Naive thymus-derived CD4-positive, alpha-beta T cell (primary cell): ENCODE measurements at regions of chr3 and their contacts with region 1.

Region 1: DNA sequence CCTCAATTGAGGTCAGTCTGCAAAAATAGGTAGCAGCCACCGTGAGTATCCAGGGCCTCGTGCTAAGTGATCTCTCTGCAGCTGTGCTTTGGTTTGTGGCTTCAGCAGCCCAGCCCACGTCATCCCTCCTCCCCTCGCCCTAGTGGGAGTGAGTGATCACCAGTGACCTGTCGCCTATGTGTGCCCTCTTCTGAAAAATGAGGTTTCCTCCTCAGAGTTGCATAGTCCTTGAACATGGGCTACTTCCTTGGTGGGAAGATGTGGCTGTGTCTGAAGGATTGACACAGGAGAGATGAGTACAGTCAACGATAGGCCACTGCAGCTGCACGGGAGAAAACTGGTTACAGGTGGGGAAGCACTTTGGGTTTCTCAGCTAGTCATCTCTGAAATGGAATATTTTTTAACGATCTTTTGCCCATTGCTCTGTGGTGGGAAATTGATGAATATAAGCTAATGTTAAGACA is 144.8 kb upstream of the BHLHE40 start:
- DNase-seq: peak in 5 of 9 donors; percentile 28 to 79 (median 39)
- ATAC-seq: peak; percentile 64
- H3K4me3 ChIP-seq: no peak overlapping the region
- H3K4me3 Mint-ChIP-seq: peak overlapping the region; percentile 21 to 86 (median 47)
- H3K27ac ChIP-seq: peak overlapping the region; percentile 55
- H3K27ac Mint-ChIP-seq: peak overlapping the region; percentile 74 to 99 (median 90)
- H3K4me1 ChIP-seq: peaks cover 53 to 67% of the 10 kb centered on the region in 2 donors
- H3K4me1 Mint-ChIP-seq: peaks cover 56 to 89% (median 80%) of the 10 kb centered on the region in 7 donors
- H3K27me3 ChIP-seq: no peaks in the 10 kb centered on the region
- H3K27me3 Mint-ChIP-seq: peaks cover 0 to 3% (median 0%) of the 10 kb centered on the region in 5 donors

Region 2: DNA sequence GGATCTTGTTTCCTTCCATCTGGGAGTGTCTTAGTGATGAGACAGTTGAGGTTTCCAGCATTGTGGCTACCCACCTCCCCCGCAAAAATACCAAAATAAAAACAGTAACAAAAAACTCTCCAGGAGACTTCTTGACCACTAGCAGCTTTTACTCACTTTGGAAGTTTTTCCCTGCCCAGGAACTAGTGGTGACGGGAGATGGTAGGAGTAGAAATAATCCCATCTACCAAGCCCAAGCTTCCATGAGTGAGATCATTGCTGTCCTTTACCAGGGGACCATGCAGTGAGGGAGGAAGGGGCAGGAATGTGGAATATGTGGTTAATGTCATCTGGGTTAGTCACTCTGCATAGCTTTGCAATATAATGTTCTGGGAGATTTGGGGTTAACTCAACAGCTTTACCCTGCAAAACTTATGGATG is 153.5 kb before region 1 on chr3:
- CTCF ChIA-PET with region 1: no interaction called
- POLR2A ChIA-PET with region 1: no interaction called
- intact Hi-C with region 1: no loop called
- DNase-seq: no peak
- ATAC-seq: no peak
- H3K4me3 ChIP-seq: no peak overlapping the region
- H3K4me3 Mint-ChIP-seq: no peak overlapping the region
- H3K27ac ChIP-seq: no peak overlapping the region
- H3K27ac Mint-ChIP-seq: no peak overlapping the region
- H3K4me1 ChIP-seq: no peaks in the 10 kb centered on the region
- H3K4me1 Mint-ChIP-seq: peaks cover 0 to 2% (median 0%) of the 10 kb centered on the region in 7 donors
- H3K27me3 ChIP-seq: no peaks in the 10 kb centered on the region
- H3K27me3 Mint-ChIP-seq: no peaks in the 10 kb centered on the region

Region 3: DNA sequence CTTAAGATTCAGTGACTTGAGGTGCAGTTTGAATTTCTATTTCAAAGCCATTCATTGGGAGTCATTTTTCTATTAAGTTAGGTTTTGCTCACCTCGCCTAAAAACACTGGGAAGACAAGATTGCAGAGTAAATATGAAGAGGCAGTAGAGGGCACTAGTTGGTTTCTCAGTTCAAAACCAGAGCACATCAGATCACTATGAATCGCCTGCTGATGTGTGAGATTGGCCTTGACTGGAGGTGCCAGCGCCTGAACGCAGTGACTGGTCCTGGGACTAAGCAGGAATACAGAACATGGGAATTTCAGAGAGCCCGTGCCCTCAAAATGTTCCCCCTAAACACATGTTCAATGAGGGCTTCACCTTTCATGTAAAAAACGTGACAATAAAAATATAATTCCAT is 112.3 kb before region 1 on chr3:
- CTCF ChIA-PET with region 1: no interaction called
- POLR2A ChIA-PET with region 1: no interaction called
- intact Hi-C with region 1: loop called in 1 of 2 experiments (anchors 2 kb)
- DNase-seq: peak in 2 of 9 donors; percentile 27 to 33
- ATAC-seq: peak; percentile 76
- H3K4me3 ChIP-seq: no peak overlapping the region
- H3K4me3 Mint-ChIP-seq: peak overlapping the region in 1 of 10 donors; percentile 33
- H3K27ac ChIP-seq: no peak overlapping the region
- H3K27ac Mint-ChIP-seq: peak overlapping the region in 2 of 9 donors; percentile 34 to 82
- H3K4me1 ChIP-seq: no peaks in the 10 kb centered on the region
- H3K4me1 Mint-ChIP-seq: peaks cover 0 to 67% (median 9%) of the 10 kb centered on the region in 7 donors
- H3K27me3 ChIP-seq: no peaks in the 10 kb centered on the region
- H3K27me3 Mint-ChIP-seq: no peaks in the 10 kb centered on the region

Region 4: GRCh38 chr3:4751502-4752101 is 82.8 kb before region 1 on chr3:
- CTCF ChIA-PET with region 1: no interaction called
- POLR2A ChIA-PET with region 1: no interaction called
- intact Hi-C with region 1: no loop called
- DNase-seq: no peak
- ATAC-seq: peak; percentile 32
- H3K4me3 ChIP-seq: no peak overlapping the region
- H3K4me3 Mint-ChIP-seq: peak overlapping the region in 2 of 10 donors; percentile 13 to 25
- H3K27ac ChIP-seq: no peak overlapping the region
- H3K27ac Mint-ChIP-seq: peak overlapping the region in 3 of 9 donors; percentile 27 to 88 (median 52)
- H3K4me1 ChIP-seq: peaks cover 0 to 4% of the 10 kb centered on the region in 2 donors
- H3K4me1 Mint-ChIP-seq: peaks cover 13 to 68% (median 24%) of the 10 kb centered on the region in 7 donors
- H3K27me3 ChIP-seq: no peaks in the 10 kb centered on the region
- H3K27me3 Mint-ChIP-seq: no peaks in the 10 kb centered on the region

Region 5: DNA sequence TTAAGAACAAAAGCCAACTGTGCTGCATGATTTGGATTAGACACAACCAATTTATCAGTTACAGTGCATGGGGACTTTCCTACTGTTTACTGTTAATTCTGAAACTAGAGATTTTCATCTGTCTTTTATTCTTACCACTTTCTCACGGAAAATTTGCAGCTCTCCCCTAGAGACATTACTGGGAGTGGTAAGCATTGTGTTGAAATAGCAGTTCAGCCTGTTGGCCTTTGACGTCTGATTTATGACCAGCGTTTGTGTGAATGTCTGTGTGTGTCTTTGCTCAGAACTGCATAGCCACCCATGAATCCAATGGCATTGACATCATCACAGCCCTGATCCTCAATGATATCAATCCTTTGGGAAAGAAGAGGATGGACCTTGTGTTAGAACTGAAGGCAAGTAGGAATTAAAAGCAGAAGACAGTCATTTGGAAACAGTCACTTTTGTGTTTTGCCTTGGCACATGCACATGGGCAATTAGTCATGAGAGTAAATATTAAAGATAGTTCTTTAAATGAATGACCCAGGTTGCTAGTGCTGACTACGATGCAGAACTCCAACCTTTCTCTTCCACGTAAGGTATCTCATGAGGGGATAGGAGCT is 57.4 kb before region 1 on chr3:
- CTCF ChIA-PET with region 1: no interaction called
- POLR2A ChIA-PET with region 1: no interaction called
- intact Hi-C with region 1: loop called in 1 of 2 experiments (anchors 1 kb)
- DNase-seq: no peak
- ATAC-seq: no peak
- H3K4me3 ChIP-seq: no peak overlapping the region
- H3K4me3 Mint-ChIP-seq: peak overlapping the region in 1 of 10 donors; percentile 87
- H3K27ac ChIP-seq: no peak overlapping the region
- H3K27ac Mint-ChIP-seq: peak overlapping the region in 3 of 9 donors; percentile 11 to 98 (median 11)
- H3K4me1 ChIP-seq: no peaks in the 10 kb centered on the region
- H3K4me1 Mint-ChIP-seq: peaks cover 0 to 68% (median 4%) of the 10 kb centered on the region in 7 donors
- H3K27me3 ChIP-seq: no peaks in the 10 kb centered on the region
- H3K27me3 Mint-ChIP-seq: no peaks in the 10 kb centered on the region

Region 6: DNA sequence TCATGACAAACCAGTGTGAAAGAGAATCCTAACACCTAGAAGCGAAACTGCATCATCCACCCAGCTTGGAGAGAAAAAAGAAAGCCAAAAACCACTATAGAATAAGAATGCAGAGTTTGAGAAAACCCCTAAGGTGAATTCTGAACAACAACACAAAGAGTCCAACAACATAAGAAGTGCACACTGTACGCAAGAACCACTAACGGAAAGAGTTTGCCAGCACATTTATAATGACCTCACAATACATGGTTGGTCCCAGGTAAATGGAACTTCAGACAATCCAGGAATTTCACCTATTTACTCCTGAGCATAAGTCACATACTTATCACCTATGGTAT is 16.5 kb after region 1 on chr3:
- CTCF ChIA-PET with region 1: interaction called, 3 read pairs
- POLR2A ChIA-PET with region 1: interaction called, 4 read pairs
- intact Hi-C with region 1: loop called (anchors 1 kb)
- DNase-seq: peak in 6 of 9 donors; percentile 19 to 64 (median 46)
- ATAC-seq: peak; percentile 83
- H3K4me3 ChIP-seq: no peak overlapping the region
- H3K4me3 Mint-ChIP-seq: peak overlapping the region in 9 of 10 donors; percentile 4 to 84 (median 56)
- H3K27ac ChIP-seq: peak overlapping the region; percentile 81
- H3K27ac Mint-ChIP-seq: peak overlapping the region; percentile 85 to 99 (median 90)
- H3K4me1 ChIP-seq: peaks cover 37 to 58% of the 10 kb centered on the region in 2 donors
- H3K4me1 Mint-ChIP-seq: peaks cover 49 to 92% (median 86%) of the 10 kb centered on the region in 7 donors
- H3K27me3 ChIP-seq: no peaks in the 10 kb centered on the region
- H3K27me3 Mint-ChIP-seq: no peaks in the 10 kb centered on the region

Region 7: DNA sequence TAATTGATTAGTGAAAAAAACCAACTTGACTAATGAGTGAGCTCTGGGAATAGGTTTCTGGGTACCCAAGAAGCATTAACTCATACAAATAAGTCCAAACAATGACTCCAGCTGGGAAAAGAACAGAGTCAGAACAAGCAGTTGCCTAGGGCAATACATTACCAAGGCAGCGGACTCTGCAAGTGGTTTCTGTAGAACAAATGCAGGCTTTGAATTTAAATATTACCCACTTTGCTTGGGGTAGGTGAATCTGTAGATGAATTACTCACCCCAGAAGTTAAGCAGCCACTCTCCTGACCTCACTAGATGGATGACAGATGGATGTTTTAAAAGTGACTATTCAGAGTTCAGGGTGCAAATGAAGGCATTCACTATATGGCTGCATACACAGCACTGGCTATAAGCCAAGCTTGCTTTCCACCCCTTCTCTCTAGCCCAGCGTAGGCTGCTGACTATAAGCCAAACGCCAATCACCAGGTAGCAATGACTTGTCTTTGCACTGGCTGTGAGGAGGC is 71.7 kb after region 1 on chr3:
- CTCF ChIA-PET with region 1: interaction called, 3 read pairs
- POLR2A ChIA-PET with region 1: no interaction called
- intact Hi-C with region 1: loop called (anchors 1 to 2 kb)
- DNase-seq: no peak
- ATAC-seq: no peak
- H3K4me3 ChIP-seq: no peak overlapping the region
- H3K4me3 Mint-ChIP-seq: peak overlapping the region in 2 of 10 donors; percentile 29 to 38
- H3K27ac ChIP-seq: no peak overlapping the region
- H3K27ac Mint-ChIP-seq: peak overlapping the region in 4 of 9 donors; percentile 7 to 75 (median 38)
- H3K4me1 ChIP-seq: peaks cover 14 to 35% of the 10 kb centered on the region in 2 donors
- H3K4me1 Mint-ChIP-seq: peaks cover 33 to 85% (median 58%) of the 10 kb centered on the region in 7 donors
- H3K27me3 ChIP-seq: no peaks in the 10 kb centered on the region
- H3K27me3 Mint-ChIP-seq: no peaks in the 10 kb centered on the region

Region 8: GRCh38 chr3:5016218-5017161 is 182.1 kb after region 1 on chr3:
- CTCF ChIA-PET with region 1: no interaction called
- POLR2A ChIA-PET with region 1: no interaction called
- intact Hi-C with region 1: loop called in 1 of 2 experiments (anchors 1 kb)
- DNase-seq: no peak
- ATAC-seq: peak; percentile 57
- H3K4me3 ChIP-seq: no peak overlapping the region
- H3K4me3 Mint-ChIP-seq: peak overlapping the region in 1 of 10 donors; percentile 54
- H3K27ac ChIP-seq: no peak overlapping the region
- H3K27ac Mint-ChIP-seq: peak overlapping the region in 6 of 9 donors; percentile 6 to 83 (median 52)
- H3K4me1 ChIP-seq: peaks cover 17 to 45% of the 10 kb centered on the region in 2 donors
- H3K4me1 Mint-ChIP-seq: peaks cover 30 to 88% (median 41%) of the 10 kb centered on the region in 7 donors
- H3K27me3 ChIP-seq: no peaks in the 10 kb centered on the region
- H3K27me3 Mint-ChIP-seq: peaks cover 0 to 5% (median 0%) of the 10 kb centered on the region in 5 donors

Region 9: DNA sequence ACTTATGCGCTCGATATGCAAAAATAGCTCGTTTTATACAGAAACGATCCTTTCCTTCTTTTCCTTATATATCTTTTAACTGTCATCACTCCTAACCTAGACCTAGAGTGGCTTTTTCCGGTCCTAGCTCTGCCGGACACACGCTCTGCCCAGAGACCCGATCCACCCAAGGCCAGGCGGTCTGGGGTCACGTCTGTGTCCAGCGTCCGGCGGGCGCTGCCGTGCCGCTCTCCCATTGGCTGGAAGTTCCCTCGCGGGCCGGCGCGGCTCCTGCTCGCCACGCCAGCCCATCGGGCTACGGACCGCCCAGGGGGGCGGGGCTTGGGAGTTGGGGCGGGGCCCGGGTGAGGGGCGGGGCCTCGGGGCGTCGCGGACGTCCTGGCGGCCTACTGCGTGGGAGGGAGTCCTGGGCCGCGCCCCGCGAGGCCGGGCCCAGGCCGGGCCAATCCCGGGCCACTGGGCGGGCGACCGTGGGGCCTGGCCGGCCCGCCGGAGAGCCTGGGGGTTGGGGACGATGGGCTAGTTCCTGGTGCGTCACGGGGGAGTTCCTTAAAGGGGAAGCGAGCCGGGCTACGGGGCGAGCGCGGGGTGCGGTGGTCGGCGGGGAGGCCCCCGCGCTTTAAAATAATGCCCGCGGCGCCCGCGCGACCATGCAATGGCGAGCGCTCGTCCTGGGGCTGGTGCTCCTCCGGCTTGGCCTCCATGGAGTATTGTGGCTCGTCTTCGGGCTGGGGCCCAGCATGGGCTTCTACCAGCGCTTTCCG is 352.9 kb after region 1 on chr3 and contains the start of gene EDEM1:
- CTCF ChIA-PET with region 1: no interaction called
- POLR2A ChIA-PET with region 1: no interaction called
- intact Hi-C with region 1: loop called (anchors 1 to 5 kb)
- DNase-seq: peak; percentile 81 to 100 (median 88)
- ATAC-seq: peak; percentile 95
- H3K4me3 ChIP-seq: peak within 1 kb of the TSS; percentile 89
- H3K4me3 Mint-ChIP-seq: peak within 1 kb of the TSS; percentile 90 to 100 (median 98)
- H3K27ac ChIP-seq: peak within 1 kb of the TSS; percentile 97
- H3K27ac Mint-ChIP-seq: peak within 1 kb of the TSS; percentile 95 to 100 (median 98)
- H3K4me1 ChIP-seq: peaks cover 13 to 21% of the 10 kb centered on the region in 2 donors
- H3K4me1 Mint-ChIP-seq: peaks cover 14 to 41% (median 32%) of the 10 kb centered on the region in 7 donors
- H3K27me3 ChIP-seq: no peaks in the 10 kb centered on the region
- H3K27me3 Mint-ChIP-seq: no peaks in the 10 kb centered on the region
- total RNA-seq, gene EDEM1: 97.3 to 138 (median 126) TPM